AG04450 (cell line): ENCODE measurements at regions of chr20 and their contacts with region 1.

Region 1: DNA sequence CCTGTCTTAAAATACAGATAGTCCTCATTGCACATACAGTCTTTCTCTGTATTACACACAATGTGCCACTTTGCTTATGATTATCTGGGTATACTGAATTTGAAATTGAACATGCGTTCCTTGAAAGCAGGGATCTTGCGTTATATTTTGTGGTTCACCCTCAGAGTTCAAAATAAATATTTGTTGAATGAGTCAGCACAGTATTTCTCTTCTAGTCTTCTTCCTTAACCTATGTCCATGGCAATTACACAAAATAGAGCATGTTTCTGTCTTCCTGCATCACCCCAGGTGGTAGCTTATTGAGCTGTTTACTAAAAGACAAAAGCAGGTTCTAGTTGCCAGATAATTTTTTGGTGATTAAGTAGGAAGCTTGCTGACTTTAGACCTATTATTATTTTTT is 272.9 kb upstream of the FERMT1 start:
- DNase-seq: no peak
- H3K4me3 ChIP-seq: no peak overlapping the region
- H3K27ac ChIP-seq: no peak overlapping the region
- H3K27me3 ChIP-seq: no peaks in the 10 kb centered on the region
- CTCF ChIP-seq: no peak

Region 2: DNA sequence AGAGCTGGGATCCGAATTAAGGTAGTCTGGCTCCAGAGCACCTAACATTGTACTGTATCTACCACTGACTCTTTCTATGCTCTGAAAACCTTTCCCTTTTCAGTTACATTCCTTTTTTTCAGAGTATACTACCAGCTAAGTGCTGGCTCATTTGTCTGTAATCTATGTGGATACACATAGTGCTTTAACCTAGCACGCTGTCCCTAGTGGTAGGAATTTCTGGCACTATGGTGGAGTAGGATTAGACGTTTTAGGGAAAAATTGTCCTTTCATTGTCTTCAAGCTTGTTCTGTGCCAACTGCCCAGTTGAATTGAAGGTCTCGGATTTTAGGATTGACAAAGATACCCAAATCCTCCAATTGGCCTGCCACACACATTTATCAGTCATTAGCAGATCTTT is 13.8 kb before region 1 on chr20:
- CTCF ChIA-PET with region 1: interaction called, 19 read pairs
- POLR2A ChIA-PET with region 1: no interaction called
- DNase-seq: peak; percentile 2
- H3K4me3 ChIP-seq: no peak overlapping the region
- H3K27ac ChIP-seq: no peak overlapping the region
- H3K27me3 ChIP-seq: peaks cover 2% of the 10 kb centered on the region
- CTCF ChIP-seq: peak; percentile 68